ENCODE measurements at regions of chr17 and their contacts with region 1.

Region 1: DNA sequence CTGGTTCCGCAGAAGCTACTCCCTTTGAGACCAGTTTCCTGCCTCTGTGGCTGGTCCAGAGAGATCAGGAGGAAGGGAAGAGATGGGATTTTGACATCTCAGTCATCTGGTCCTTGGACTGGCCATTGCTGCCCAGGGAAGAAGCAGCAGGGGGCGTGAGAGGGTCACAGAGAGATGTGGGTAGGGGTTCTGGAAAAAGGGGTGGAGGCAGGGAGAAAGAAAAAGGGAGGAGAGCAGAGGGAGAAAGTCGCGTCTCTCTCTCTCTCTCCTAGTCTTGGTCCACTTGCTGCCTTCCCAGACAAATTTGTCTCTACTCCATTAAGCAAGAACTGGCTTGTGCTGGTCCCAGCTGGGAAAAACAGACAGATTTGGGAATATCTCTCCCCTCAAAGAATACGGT is 4.4 kb downstream of the SHBG start:
- DNase-seq: peak; percentile 64 to 68
- H3K4me3 ChIP-seq: no peak overlapping the region
- H3K4me3 Mint-ChIP-seq: no peak overlapping the region
- H3K27ac Mint-ChIP-seq: no peak overlapping the region
- H3K4me1 ChIP-seq: peaks cover 3% of the 10 kb centered on the region; the same call in 1 of the 2 replicates
- H3K4me1 Mint-ChIP-seq: no peaks in the 10 kb centered on the region
- H3K27me3 ChIP-seq: no peaks in the 10 kb centered on the region
- H3K27me3 Mint-ChIP-seq: no peaks in the 10 kb centered on the region
- CTCF ChIP-seq: peak; percentile 27 to 55

Region 2: DNA sequence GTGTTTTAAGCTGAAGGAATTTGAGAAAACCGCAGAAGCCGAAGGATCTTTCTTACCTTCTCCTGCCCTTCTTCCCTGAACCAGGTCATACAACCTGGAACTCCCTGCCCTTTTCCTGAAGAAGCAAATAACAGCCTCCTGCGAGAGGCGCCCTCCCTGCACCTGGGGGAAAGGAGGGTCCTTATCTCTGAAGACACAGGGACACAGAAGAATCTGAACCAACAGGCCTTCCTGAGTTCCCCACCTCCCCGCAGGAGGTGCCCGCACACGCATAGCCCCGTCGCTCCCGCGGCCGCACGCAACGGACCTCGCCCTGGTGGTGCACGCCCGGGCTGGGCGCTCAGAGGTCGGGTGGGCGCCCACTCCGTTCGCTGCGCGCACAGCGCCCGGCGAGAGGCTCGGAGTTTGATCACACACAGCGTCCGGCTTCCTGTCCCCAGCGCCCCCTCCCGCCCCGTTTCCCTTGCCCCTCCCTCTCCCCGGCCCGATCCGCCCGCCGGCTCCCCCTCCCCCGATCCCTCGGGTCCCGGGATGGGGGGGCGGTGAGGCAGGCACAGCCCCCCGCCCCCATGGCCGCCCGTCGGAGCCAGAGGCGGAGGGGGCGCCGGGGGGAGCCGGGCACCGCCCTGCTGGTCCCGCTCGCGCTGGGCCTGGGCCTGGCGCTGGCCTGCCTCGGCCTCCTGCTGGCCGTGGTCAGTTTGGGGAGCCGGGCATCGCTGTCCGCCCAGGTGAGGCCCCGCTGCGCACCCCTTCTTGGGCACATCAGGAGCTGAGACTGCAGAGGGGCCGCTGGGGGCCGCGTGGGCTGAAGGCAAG is 85.6 kb before region 1 on chr17 and contains the start of gene TNFSF12:
- CTCF ChIA-PET with region 1: no interaction called
- POLR2A ChIA-PET with region 1: no interaction called
- intact Hi-C with region 1: no loop called
- DNase-seq: no peak
- H3K4me3 ChIP-seq: no peak within 1 kb of the TSS
- H3K4me3 Mint-ChIP-seq: no peak within 1 kb of the TSS
- H3K27ac Mint-ChIP-seq: no peak within 1 kb of the TSS
- H3K4me1 ChIP-seq: peaks cover 4% of the 10 kb centered on the region; the same call in 1 of the 2 replicates
- H3K4me1 Mint-ChIP-seq: peaks cover 10% of the 10 kb centered on the region
- H3K27me3 ChIP-seq: no peaks in the 10 kb centered on the region
- H3K27me3 Mint-ChIP-seq: no peaks in the 10 kb centered on the region
- CTCF ChIP-seq: no peak
- total RNA-seq, gene TNFSF12: not detected in 2 replicates

Region 3: GRCh38 chr17:7650509-7651096 is 16.2 kb after region 1 on chr17 and contains the start of gene ATP1B2:
- CTCF ChIA-PET with region 1: interaction called, 6 read pairs
- POLR2A ChIA-PET with region 1: interaction called, 10 read pairs
- intact Hi-C with region 1: no loop called
- DNase-seq: peak; percentile 68 to 84
- H3K4me3 ChIP-seq: peak within 1 kb of the TSS; percentile 35
- H3K4me3 Mint-ChIP-seq: peak within 1 kb of the TSS; percentile 80
- H3K27ac Mint-ChIP-seq: no peak within 1 kb of the TSS
- H3K4me1 ChIP-seq: no peaks in the 10 kb centered on the region
- H3K4me1 Mint-ChIP-seq: peaks cover 10% of the 10 kb centered on the region
- H3K27me3 ChIP-seq: no peaks in the 10 kb centered on the region
- H3K27me3 Mint-ChIP-seq: peaks cover 9% of the 10 kb centered on the region
- CTCF ChIP-seq: no peak
- total RNA-seq, gene ATP1B2: 0.11 and 0.14 TPM in 2 replicates